ENCODE measurements at regions of chr3 and their contacts with region 1.

Region 1: DNA sequence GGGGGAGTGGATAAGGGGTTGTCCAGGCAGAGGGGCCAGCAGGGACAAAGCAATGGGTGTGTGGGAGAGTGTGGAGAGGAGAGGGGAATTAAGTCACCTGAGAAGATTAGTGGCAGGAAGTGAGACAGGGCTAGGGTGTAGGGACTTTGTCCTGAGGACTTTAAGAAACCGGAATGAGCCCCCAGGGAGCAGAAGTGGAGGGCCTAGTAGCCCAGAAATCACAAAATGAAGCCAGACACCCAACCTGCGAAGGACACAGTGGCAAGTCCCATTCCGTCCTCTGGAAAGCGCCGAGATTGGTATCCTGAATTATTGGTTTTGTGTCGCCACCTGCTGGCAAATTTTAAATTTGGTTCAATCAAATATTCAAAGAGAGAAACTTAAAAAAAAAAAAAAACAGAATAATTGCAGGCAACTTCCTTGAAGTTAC is 78.0 kb upstream of the SLC25A36 start:
- DNase-seq: peak; percentile 17
- ATAC-seq: no peak
- H3K4me3 Mint-ChIP-seq: no peak overlapping the region
- H3K27ac Mint-ChIP-seq: no peak overlapping the region
- H3K4me1 Mint-ChIP-seq: peaks cover 3% of the 10 kb centered on the region
- H3K27me3 Mint-ChIP-seq: no peaks in the 10 kb centered on the region
- CTCF ChIP-seq: no peak

Region 2: DNA sequence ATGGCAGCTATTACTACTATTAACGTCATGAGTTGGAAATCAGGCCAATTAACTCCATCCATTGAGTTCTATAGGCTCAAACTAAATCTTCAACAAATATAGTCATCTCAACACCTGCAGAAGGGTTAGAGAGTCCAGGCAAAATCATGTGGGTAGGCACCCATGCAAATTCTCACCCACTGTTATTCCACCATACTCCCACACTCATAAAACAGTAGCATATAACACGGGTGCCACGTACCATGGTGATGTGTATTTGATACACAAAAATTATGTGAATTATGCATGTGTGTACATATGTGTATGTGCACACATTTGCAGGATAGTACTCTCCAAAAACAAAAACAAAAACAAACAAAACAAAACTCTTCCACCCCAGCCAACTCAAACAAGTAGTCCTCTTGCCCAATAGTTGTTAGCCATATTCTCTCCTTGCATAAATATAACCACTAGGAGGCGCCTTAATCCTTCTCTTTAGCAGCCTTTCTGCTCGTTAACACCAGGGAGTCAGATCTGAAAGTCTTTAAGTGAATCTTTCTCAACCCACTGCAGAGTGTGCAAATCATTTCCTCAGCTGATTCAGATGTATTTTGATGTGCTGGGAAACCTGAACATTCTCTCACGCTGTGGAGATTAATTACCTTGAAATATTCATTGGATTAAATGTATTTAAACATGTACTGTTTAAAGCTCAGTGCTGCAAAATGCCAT is 1436.2 kb before region 1 on chr3:
- CTCF ChIA-PET with region 1: interaction called, 5 read pairs
- POLR2A ChIA-PET with region 1: no interaction called
- intact Hi-C with region 1: loop called (anchors 1 kb)
- DNase-seq: no peak
- ATAC-seq: peak; percentile 42
- H3K4me3 Mint-ChIP-seq: no peak overlapping the region
- H3K27ac Mint-ChIP-seq: no peak overlapping the region
- H3K4me1 Mint-ChIP-seq: no peaks in the 10 kb centered on the region
- H3K27me3 Mint-ChIP-seq: no peaks in the 10 kb centered on the region
- CTCF ChIP-seq: no peak

Region 3: DNA sequence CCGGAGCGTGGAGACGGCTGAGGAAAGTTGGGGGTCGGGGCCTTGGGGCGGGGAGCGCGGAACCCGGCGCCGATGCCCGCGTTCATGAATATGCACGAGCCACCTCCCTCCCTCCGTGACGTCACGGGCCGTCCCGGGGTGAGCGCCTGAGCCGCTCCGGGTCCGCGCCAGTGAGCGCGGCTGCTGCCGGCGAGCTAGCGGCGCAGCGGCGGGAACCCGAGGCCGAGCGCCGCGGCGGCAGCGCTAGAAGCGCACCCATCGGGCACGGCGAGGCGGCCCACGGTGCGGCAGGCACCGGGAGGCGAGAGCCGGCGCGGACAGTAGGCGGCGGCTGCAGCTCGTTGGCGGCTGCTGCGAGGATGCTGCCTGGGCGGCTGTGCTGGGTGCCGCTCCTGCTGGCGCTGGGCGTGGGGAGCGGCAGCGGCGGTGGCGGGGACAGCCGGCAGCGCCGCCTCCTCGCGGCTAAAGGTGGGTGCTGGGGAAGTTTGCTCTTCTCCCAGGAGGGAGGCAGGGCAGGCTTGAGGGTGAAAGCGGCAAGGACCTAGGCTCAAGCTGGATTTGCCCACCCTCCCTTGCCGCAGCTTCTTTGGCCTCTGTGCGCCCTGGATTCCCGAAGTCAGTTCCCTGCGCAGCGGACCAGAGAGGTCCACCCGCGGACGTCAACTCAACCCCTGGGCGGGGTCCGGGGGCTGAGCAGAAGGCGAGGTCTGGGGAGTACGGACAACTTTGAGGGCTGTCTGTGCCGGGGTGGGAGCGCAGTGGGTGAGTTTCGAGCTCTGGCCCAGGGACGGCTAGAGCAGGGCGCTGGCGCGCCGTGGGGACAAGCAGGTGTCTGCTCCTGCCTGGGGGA is 928.4 kb before region 1 on chr3 and contains the start of gene CLSTN2:
- CTCF ChIA-PET with region 1: interaction called, 5 read pairs
- POLR2A ChIA-PET with region 1: no interaction called
- intact Hi-C with region 1: loop called (anchors 1 kb)
- DNase-seq: no peak
- ATAC-seq: no peak
- H3K4me3 Mint-ChIP-seq: no peak within 1 kb of the TSS
- H3K27ac Mint-ChIP-seq: no peak within 1 kb of the TSS
- H3K4me1 Mint-ChIP-seq: peaks cover 13% of the 10 kb centered on the region
- H3K27me3 Mint-ChIP-seq: peaks cover 42% of the 10 kb centered on the region
- CTCF ChIP-seq: no peak
- total RNA-seq, gene CLSTN2: not detected in 2 replicates

Region 4: DNA sequence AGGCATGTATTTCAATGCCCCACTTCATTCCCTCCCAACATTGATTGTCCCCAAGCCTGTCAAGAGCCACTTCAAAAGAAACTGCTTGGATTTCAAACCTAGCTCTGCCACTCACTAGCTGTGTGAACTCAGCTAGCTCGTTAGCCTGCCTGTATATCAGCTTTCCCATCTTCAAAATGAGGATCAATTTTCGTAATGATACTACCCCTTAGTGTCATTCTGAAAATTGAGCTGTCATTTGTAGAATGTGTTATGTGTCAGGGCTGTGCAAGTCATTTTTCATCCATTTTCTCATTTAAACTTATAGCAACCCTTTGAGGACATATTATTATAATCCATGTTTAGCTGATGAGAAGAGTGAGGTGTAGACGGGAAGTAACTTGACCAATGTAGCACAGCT is 97.1 kb before region 1 on chr3:
- CTCF ChIA-PET with region 1: no interaction called
- POLR2A ChIA-PET with region 1: no interaction called
- intact Hi-C with region 1: no loop called
- DNase-seq: no peak
- ATAC-seq: no peak
- H3K4me3 Mint-ChIP-seq: no peak overlapping the region
- H3K27ac Mint-ChIP-seq: no peak overlapping the region
- H3K4me1 Mint-ChIP-seq: peaks cover 5% of the 10 kb centered on the region
- H3K27me3 Mint-ChIP-seq: peaks cover 4% of the 10 kb centered on the region
- CTCF ChIP-seq: no peak

Measured in activated B cell treated with CpG ODN at 0.5 μM for 24 hours (primary cell).